ENCODE measurements at regions of chr6 and their contacts with region 1.

Region 1: GRCh38 chr6:136201732-136202131 is 48.4 kb downstream of the MTFR2 start:
- DNase-seq: no peak
- H3K4me3 ChIP-seq: no peak overlapping the region
- CTCF ChIP-seq: no peak

Region 2: GRCh38 chr6:135938576-135939207 is 263.0 kb before region 1 on chr6:
- in situ Hi-C with region 1: loop called (anchors 25 kb)
- DNase-seq: peak; percentile 23
- H3K4me3 ChIP-seq: no peak overlapping the region
- CTCF ChIP-seq: peak; percentile 33

Region 3: GRCh38 chr6:136146130-136146529 is 55.6 kb before region 1 on chr6:
- in situ Hi-C with region 1: loop called (anchors 5 kb)
- DNase-seq: no peak
- H3K4me3 ChIP-seq: no peak overlapping the region
- CTCF ChIP-seq: no peak